Calu3 (cell line): ENCODE measurements at regions of chr5 and their contacts with region 1.

Region 1: GRCh38 chr5:132495667-132496190 is 5.2 kb upstream of the IRF1 start:
- DNase-seq: peak; percentile 79
- H3K4me3 Mint-ChIP-seq: peak overlapping the region; percentile 86
- H3K27ac Mint-ChIP-seq: peak overlapping the region; percentile 32
- H3K4me1 Mint-ChIP-seq: peaks cover 66% of the 10 kb centered on the region
- H3K27me3 Mint-ChIP-seq: no peaks in the 10 kb centered on the region
- CTCF ChIP-seq: no peak

Region 2: GRCh38 chr5:132410451-132411381 is 85.0 kb before region 1 on chr5:
- CTCF ChIA-PET with region 1: interaction called, 10 read pairs
- intact Hi-C with region 1: loop called (anchors 2 kb)
- DNase-seq: peak; percentile 91
- H3K4me3 Mint-ChIP-seq: peak overlapping the region; percentile 75
- H3K27ac Mint-ChIP-seq: peak overlapping the region; percentile 78
- H3K4me1 Mint-ChIP-seq: peaks cover 59% of the 10 kb centered on the region
- H3K27me3 Mint-ChIP-seq: no peaks in the 10 kb centered on the region
- CTCF ChIP-seq: peak; percentile 85